Naive thymus-derived CD4-positive, alpha-beta T cell (primary cell): ENCODE measurements at regions of chr19 and their contacts with region 1.

Region 1: DNA sequence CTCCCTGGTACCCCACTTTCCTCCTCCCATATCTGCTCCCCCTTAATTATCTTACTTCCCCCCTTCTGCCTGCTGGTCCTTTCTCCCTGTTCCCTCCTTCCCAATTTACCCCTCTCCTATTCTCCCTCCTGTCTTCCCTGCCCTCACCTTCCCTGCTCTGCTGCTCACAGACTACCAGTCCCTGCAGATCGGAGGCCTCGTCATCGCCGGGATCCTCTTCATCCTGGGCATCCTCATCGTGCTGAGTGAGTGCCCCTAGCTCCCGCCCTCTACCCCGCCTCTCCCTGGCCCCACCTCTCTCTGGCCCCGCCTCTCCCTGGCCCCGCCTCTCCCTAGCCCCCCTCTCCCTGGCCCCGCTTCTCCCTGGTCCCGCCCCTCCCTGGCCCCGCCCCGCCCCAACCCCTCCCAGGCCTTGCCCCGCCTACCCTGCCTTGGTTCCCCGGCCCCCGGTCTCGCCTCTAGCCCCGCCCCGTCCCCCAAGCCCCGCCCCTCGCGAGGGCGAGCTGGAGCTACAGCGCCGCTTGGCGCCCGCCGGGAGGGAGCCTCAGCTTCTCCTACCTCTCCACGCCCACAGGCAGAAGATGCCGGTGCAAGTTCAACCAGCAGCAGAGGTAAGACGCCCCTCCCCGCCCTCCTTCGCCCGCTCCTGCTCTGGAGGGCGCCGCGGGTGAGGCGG is 2.0 kb upstream of the FXYD7 start:
- DNase-seq: peak; percentile 88 to 97 (median 92)
- ATAC-seq: peak; percentile 93
- H3K4me3 ChIP-seq: peak overlapping the region; percentile 65
- H3K4me3 Mint-ChIP-seq: peak overlapping the region; percentile 80 to 96 (median 85)
- H3K27ac ChIP-seq: no peak overlapping the region
- H3K27ac Mint-ChIP-seq: peak overlapping the region; percentile 78 to 93 (median 84)
- H3K4me1 ChIP-seq: peaks cover 28 to 34% of the 10 kb centered on the region in 2 donors
- H3K4me1 Mint-ChIP-seq: peaks cover 31 to 47% (median 37%) of the 10 kb centered on the region in 7 donors
- H3K27me3 ChIP-seq: no peaks in the 10 kb centered on the region
- H3K27me3 Mint-ChIP-seq: peaks cover 0 to 33% (median 0%) of the 10 kb centered on the region in 5 donors

Region 2: GRCh38 chr19:34974646-34975045 is 166.5 kb before region 1 on chr19:
- CTCF ChIA-PET with region 1: no interaction called
- POLR2A ChIA-PET with region 1: interaction called, 4 read pairs
- intact Hi-C with region 1: loop called in 1 of 2 experiments (anchors 1 kb)
- DNase-seq: no peak
- ATAC-seq: no peak
- H3K4me3 ChIP-seq: no peak overlapping the region
- H3K4me3 Mint-ChIP-seq: peak overlapping the region in 4 of 10 donors; percentile 29 to 91 (median 38)
- H3K27ac ChIP-seq: no peak overlapping the region
- H3K27ac Mint-ChIP-seq: peak overlapping the region in 4 of 9 donors; percentile 23 to 86 (median 78)
- H3K4me1 ChIP-seq: peaks cover 8 to 9% of the 10 kb centered on the region in 2 donors
- H3K4me1 Mint-ChIP-seq: peaks cover 11 to 35% (median 26%) of the 10 kb centered on the region in 7 donors
- H3K27me3 ChIP-seq: no peaks in the 10 kb centered on the region
- H3K27me3 Mint-ChIP-seq: peaks cover 0 to 7% (median 0%) of the 10 kb centered on the region in 5 donors

Region 3: DNA sequence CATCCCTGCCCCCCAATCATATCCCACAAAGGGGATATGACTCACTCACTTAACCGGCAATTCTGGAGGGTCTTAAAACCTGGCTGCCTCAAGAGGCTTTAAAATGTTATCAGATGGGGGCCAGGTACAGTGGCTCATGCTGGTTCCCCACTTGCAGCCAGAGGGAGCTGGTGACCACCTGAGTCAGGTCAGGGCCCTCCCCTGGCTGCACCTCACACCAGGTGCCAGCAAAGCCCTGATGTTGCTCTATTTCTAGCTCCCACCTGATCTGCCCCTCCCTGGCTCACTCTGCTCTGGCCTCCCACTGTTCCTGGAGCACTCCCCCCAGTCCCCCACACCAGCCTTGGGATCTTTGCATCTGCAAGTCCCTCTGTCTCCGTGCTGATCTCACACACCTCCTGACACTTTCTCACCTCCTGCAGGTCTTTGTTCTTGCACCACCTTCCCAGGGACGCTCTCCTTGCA is 85.4 kb before region 1 on chr19:
- CTCF ChIA-PET with region 1: no interaction called
- POLR2A ChIA-PET with region 1: no interaction called
- intact Hi-C with region 1: no loop called
- DNase-seq: no peak
- ATAC-seq: no peak
- H3K4me3 ChIP-seq: no peak overlapping the region
- H3K4me3 Mint-ChIP-seq: peak overlapping the region in 1 of 10 donors; percentile 21
- H3K27ac ChIP-seq: no peak overlapping the region
- H3K27ac Mint-ChIP-seq: peak overlapping the region in 1 of 9 donors; percentile 61
- H3K4me1 ChIP-seq: no peaks in the 10 kb centered on the region
- H3K4me1 Mint-ChIP-seq: peaks cover 0 to 1% (median 0%) of the 10 kb centered on the region in 7 donors
- H3K27me3 ChIP-seq: no peaks in the 10 kb centered on the region
- H3K27me3 Mint-ChIP-seq: peaks cover 0 to 11% (median 6%) of the 10 kb centered on the region in 5 donors

Region 4: GRCh38 chr19:35124098-35125060 is 16.7 kb before region 1 on chr19:
- CTCF ChIA-PET with region 1: interaction called, 8 read pairs
- POLR2A ChIA-PET with region 1: interaction called, 12 read pairs
- intact Hi-C with region 1: loop called in 1 of 2 experiments (anchors 1 kb)
- DNase-seq: peak; percentile 79 to 89 (median 85)
- ATAC-seq: peak; percentile 90
- H3K4me3 ChIP-seq: peak overlapping the region; percentile 69
- H3K4me3 Mint-ChIP-seq: peak overlapping the region; percentile 77 to 91 (median 85)
- H3K27ac ChIP-seq: peak overlapping the region; percentile 66
- H3K27ac Mint-ChIP-seq: peak overlapping the region; percentile 82 to 91 (median 88)
- H3K4me1 ChIP-seq: peaks cover 3 to 11% of the 10 kb centered on the region in 2 donors
- H3K4me1 Mint-ChIP-seq: peaks cover 12 to 17% (median 14%) of the 10 kb centered on the region in 7 donors
- H3K27me3 ChIP-seq: no peaks in the 10 kb centered on the region
- H3K27me3 Mint-ChIP-seq: no peaks in the 10 kb centered on the region

Region 5: GRCh38 chr19:35247526-35248306 is 106.6 kb after region 1 on chr19:
- CTCF ChIA-PET with region 1: no interaction called
- POLR2A ChIA-PET with region 1: interaction called, 10 read pairs
- intact Hi-C with region 1: loop called in 1 of 2 experiments (anchors 1 kb)
- DNase-seq: peak in 4 of 9 donors; percentile 33 to 52 (median 39)
- ATAC-seq: peak; percentile 63
- H3K4me3 ChIP-seq: peak overlapping the region; percentile 81
- H3K4me3 Mint-ChIP-seq: peak overlapping the region; percentile 87 to 92 (median 92)
- H3K27ac ChIP-seq: peak overlapping the region; percentile 63
- H3K27ac Mint-ChIP-seq: peak overlapping the region; percentile 64 to 95 (median 90)
- H3K4me1 ChIP-seq: peaks cover 0 to 4% of the 10 kb centered on the region in 2 donors
- H3K4me1 Mint-ChIP-seq: peaks cover 18 to 41% (median 33%) of the 10 kb centered on the region in 7 donors
- H3K27me3 ChIP-seq: no peaks in the 10 kb centered on the region
- H3K27me3 Mint-ChIP-seq: peaks cover 0 to 66% (median 5%) of the 10 kb centered on the region in 5 donors

Region 6: GRCh38 chr19:35462476-35462953 is 321.4 kb after region 1 on chr19:
- CTCF ChIA-PET with region 1: no interaction called
- POLR2A ChIA-PET with region 1: interaction called, 4 read pairs
- intact Hi-C with region 1: loop called (anchors 2 to 10 kb)
- DNase-seq: peak in 8 of 9 donors; percentile 32 to 88 (median 82)
- ATAC-seq: peak; percentile 95
- H3K4me3 ChIP-seq: peak overlapping the region; percentile 6
- H3K4me3 Mint-ChIP-seq: peak overlapping the region; percentile 25 to 87 (median 76)
- H3K27ac ChIP-seq: peak overlapping the region; percentile 22
- H3K27ac Mint-ChIP-seq: peak overlapping the region; percentile 75 to 98 (median 91)
- H3K4me1 ChIP-seq: peaks cover 14 to 29% of the 10 kb centered on the region in 2 donors
- H3K4me1 Mint-ChIP-seq: peaks cover 30 to 37% (median 35%) of the 10 kb centered on the region in 7 donors
- H3K27me3 ChIP-seq: no peaks in the 10 kb centered on the region
- H3K27me3 Mint-ChIP-seq: peaks cover 0 to 8% (median 0%) of the 10 kb centered on the region in 5 donors

Region 7: DNA sequence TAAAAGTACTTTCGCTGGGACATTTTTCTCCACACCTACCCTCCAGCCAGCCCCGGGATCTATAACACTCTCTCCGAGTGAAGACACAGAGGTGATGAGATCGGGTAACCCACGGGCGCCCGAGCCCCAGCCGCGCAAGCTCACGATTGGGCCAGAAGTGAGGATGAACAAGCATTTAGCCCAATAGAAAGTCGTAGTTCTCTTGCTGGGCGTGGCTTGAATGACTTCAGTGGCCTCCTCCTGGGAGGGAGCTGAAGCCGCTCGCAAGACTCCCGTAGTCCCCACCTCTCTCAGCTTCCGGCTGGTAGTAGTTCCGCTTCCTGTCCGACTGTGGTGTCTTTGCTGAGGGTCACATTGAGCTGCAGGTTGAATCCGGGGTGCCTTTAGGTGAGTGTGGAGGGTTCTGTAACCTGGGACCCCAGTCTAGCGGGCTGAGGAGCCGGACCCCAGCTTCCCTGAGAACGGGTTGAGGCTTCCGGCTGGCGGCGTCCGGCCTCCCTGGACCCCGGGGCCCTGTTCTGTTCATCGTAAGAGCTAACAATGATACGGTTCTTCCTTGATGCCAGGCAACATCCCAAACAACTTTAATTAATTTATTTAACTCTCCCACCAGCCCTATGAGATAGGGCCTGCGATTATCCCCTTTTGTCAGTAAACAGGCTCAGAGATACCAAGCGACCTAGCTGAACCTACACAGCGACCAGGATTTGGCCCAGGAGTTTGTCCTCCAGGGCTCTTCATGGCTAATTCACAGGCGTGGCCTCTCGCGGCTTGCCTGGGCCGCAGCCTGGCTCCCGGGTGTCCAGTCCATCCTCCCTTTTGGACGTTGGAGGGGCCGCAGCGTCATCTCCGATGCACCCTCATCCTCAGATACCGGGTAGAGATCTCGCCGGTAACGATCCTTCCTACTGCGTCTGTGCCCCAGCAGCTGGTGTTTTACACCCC is 507.2 kb after region 1 on chr19 and contains the start of gene COX6B1:
- CTCF ChIA-PET with region 1: no interaction called
- POLR2A ChIA-PET with region 1: no interaction called
- intact Hi-C with region 1: loop called in 1 of 2 experiments (anchors 5 kb)
- DNase-seq: peak; percentile 63 to 95 (median 91)
- ATAC-seq: peak; percentile 80
- H3K4me3 ChIP-seq: peak within 1 kb of the TSS; percentile 95
- H3K4me3 Mint-ChIP-seq: peak within 1 kb of the TSS; percentile 88 to 99 (median 97)
- H3K27ac ChIP-seq: peak within 1 kb of the TSS; percentile 89
- H3K27ac Mint-ChIP-seq: peak within 1 kb of the TSS; percentile 89 to 98 (median 95)
- H3K4me1 ChIP-seq: peaks cover 7 to 25% of the 10 kb centered on the region in 2 donors
- H3K4me1 Mint-ChIP-seq: peaks cover 17 to 67% (median 42%) of the 10 kb centered on the region in 7 donors
- H3K27me3 ChIP-seq: no peaks in the 10 kb centered on the region
- H3K27me3 Mint-ChIP-seq: no peaks in the 10 kb centered on the region
- total RNA-seq, gene COX6B1: 172 to 464 (median 232) TPM